ENCODE measurements at regions of chr5 and their contacts with region 1.

Region 1: DNA sequence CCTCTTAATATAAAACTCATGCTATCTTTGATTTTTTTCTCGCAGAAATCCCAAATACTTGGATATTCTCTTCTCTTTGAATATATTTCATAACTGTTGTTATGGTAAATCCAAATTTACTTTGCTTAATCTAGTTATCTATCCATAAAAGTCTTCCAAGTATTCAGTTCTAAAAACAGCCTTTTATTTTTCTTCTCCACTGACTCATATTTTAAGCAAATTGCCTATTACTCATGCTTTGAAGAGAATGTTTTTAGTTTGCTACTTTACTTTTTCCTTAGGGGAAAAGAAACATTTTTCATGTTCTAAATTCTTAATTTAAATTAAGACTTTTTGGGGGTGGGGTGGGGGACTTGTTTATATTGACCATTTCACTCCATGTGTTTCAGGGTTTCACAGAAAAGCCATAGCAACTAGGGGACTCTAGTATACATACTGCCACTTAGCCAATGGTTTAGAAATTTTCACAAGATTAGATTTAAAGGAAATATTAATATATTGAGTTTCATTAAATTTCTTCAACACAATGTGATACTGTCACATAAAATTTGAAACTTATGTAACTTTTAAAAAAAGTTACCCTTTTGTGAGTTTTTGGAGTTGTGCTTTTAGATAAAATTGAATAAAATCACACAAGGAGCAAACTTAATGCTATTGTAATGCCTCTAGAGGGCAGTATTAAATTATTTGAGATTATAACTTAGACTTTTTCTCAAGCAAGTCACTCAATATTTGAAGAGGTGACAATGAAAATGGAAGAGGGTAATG is 545.8 kb upstream of the ARRDC3 start:
- DNase-seq: peak in 1 of 2 experiments; percentile 43
- H3K4me3 ChIP-seq: no peak overlapping the region
- H3K27ac ChIP-seq: no peak overlapping the region
- H3K4me1 ChIP-seq: no peaks in the 10 kb centered on the region
- H3K27me3 ChIP-seq: no peaks in the 10 kb centered on the region
- CTCF ChIP-seq: peak; percentile 74

Region 2: DNA sequence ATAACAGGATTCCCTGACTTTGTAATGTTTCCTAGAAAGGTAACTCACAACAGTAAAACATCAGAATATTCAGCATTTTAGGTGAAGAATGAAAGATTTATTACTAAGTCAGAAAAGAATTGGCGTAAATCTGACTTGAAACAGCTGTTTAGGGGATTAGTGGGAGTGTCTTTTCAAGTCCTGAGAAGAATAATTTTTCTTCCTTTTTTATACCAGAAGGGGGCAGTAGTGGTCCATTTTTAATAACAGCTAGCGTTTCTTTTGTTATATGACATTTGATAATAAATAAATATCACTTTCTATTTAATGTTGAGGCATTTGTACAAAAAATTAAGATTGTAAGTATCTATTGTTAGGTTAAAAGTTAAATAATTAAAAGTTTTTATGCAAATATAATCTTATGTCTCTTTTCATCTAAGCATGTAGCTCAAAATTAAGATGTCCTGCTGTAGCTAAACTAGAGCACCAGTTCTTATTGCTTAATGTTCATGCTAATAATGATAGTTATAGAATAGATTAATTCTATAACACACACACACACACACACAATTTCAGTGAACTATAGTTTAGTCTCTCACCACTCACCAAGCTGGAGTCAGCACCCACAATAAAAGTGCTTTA is 287.1 kb before region 1 on chr5:
- CTCF ChIA-PET with region 1: interaction called, 3 read pairs
- POLR2A ChIA-PET with region 1: no interaction called
- intact Hi-C with region 1: loop called (anchors 5 kb)
- DNase-seq: peak in 1 of 2 experiments; percentile 45
- H3K4me3 ChIP-seq: no peak overlapping the region; the same call in 1 of the 2 replicates
- H3K27ac ChIP-seq: no peak overlapping the region
- H3K4me1 ChIP-seq: no peaks in the 10 kb centered on the region
- H3K27me3 ChIP-seq: no peaks in the 10 kb centered on the region
- CTCF ChIP-seq: peak; percentile 87